IMR-90 (cell line): ENCODE measurements at regions of chr13 and their contacts with region 1.

Region 1: DNA sequence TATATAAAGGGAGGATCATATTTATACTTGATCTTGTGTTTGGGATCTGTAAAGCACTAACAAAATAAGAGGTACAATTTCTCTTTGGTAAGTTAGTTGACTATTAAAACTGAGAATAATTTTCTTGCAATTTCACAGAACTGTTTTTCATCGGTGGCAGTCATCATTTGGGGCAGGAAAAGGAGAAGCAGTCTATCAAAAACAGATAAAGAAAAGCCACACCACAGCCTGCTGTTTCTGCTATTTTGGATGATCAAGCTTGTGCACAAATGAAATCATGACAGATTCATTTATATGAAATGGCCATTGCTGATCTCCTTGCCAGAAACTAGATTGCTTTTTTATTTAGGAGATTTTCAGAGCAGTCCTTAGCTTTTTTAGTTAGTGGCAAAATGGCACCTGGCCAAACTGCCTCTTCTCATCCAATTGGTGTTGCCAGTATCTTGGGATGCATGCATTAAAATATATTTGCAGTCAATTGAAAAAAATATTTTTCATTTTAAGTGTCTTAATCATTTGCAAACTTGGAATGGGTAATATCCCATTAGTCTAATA is 326.0 kb downstream of the HS6ST3 start:
- DNase-seq: no peak
- ATAC-seq: no peak
- H3K4me3 ChIP-seq: no peak overlapping the region
- H3K27ac ChIP-seq: no peak overlapping the region
- H3K4me1 ChIP-seq: no peaks in the 10 kb centered on the region
- H3K27me3 ChIP-seq: no peaks in the 10 kb centered on the region
- CTCF ChIP-seq: no peak
- POLR2A ChIP-seq: no peak
- RAD21 ChIP-seq: no peak

Region 2: DNA sequence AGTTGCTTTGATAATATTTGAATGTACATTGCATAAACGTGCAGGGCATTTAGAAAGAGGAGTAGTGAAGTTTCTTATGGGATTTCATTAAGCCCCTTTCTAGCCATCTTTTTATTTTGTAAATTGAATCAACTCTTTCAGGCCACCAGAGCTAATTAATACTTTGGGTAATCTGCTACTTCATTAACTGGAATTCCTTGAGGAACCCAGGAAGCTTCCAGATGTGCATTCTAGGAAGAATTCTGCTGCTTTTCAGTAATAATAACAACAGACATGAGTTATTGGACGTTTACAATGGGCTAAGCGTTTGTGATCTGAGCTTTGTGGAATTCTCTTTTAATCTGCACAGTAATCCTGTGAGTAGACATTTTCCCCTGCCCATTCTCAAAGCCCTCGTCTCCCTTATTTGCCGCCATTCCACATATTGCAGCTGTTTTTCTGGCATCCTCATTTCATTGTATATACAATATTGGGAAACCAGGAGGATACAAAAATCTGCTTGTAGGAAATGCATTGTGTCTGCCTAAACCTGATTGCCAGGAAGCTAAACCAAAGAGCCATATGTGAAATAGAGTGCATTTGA is 222.1 kb before region 1 on chr13:
- CTCF ChIA-PET with region 1: no interaction called
- POLR2A ChIA-PET with region 1: no interaction called
- dilution Hi-C with region 1: no loop called
- in situ Hi-C with region 1: no loop called
- intact Hi-C with region 1: loop called (anchors 5 kb)
- DNase-seq: no peak
- ATAC-seq: no peak
- H3K4me3 ChIP-seq: no peak overlapping the region
- H3K27ac ChIP-seq: no peak overlapping the region
- H3K4me1 ChIP-seq: no peaks in the 10 kb centered on the region
- H3K27me3 ChIP-seq: no peaks in the 10 kb centered on the region
- CTCF ChIP-seq: no peak
- POLR2A ChIP-seq: no peak
- RAD21 ChIP-seq: no peak

Region 3: GRCh38 chr13:96373597-96373996 is 42.3 kb before region 1 on chr13:
- CTCF ChIA-PET with region 1: no interaction called
- POLR2A ChIA-PET with region 1: no interaction called
- dilution Hi-C with region 1: no loop called
- in situ Hi-C with region 1: no loop called
- intact Hi-C with region 1: no loop called
- DNase-seq: no peak
- ATAC-seq: no peak
- H3K4me3 ChIP-seq: no peak overlapping the region
- H3K27ac ChIP-seq: no peak overlapping the region
- H3K4me1 ChIP-seq: no peaks in the 10 kb centered on the region
- H3K27me3 ChIP-seq: no peaks in the 10 kb centered on the region
- CTCF ChIP-seq: no peak
- POLR2A ChIP-seq: no peak
- RAD21 ChIP-seq: no peak